Activated CD8-positive, alpha-beta memory T cell treated with anti-CD3 and anti-CD28 coated beads, Interleukin-2, amount 10 ng/mL, durations not matched to agents 7 days and 5 days (primary cell): ENCODE measurements at regions of chr3 and their contacts with region 1.

Region 1: GRCh38 chr3:111967651-111968274 is 11.1 kb upstream of the ABHD10 start:
- DNase-seq: peak; percentile 88
- ATAC-seq: peak; percentile 90
- H3K4me3 Mint-ChIP-seq: no peak overlapping the region
- H3K27ac Mint-ChIP-seq: peak overlapping the region; percentile 5
- H3K4me1 Mint-ChIP-seq: peaks cover 13% of the 10 kb centered on the region
- H3K27me3 Mint-ChIP-seq: no peaks in the 10 kb centered on the region

Region 2: DNA sequence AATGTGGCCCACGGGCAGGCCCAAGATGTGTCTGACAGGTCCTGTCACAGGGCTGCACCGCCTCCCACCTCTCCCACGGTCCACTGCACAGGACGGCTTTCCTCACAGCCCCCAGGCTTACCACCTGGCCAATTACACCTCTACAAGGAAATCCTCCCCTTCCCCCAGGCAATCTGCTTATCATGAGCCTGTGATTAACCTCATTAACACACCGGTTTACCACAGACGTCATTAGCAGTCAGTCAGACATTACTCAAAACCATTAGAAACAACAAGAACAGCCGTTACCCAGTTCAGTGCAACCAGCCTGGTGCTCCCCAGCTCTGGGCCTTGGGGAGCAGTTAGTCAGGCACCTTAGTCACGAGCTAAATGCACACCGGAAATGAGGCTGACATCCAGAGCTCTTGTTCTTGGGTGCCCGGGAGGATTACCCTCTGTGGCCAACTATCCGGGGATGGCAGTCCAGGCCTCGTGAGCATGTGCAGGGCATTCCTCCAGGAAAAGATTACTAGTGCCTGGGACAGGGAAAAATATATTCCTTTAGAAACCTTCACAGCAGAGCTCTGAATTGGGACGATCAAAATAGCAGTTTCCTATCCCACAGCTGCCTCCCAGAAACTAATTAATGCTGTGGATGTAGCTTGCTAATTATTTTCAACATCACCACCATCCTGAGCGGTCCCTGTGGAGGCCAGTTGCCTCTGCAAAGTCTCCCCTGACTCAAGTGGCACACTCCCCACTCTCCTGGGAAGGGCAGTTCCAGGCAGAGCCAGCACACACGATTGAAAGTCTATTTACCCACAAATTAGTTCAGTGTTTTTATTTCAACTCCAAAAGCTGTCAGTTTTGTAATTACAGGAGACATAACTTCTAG is 255.2 kb before region 1 on chr3:
- CTCF ChIA-PET with region 1: interaction called, 137 read pairs
- DNase-seq: peak; percentile 79
- ATAC-seq: peak; percentile 93
- H3K4me3 Mint-ChIP-seq: peak overlapping the region; percentile 31
- H3K27ac Mint-ChIP-seq: peak overlapping the region; percentile 86
- H3K4me1 Mint-ChIP-seq: peaks cover 27% of the 10 kb centered on the region
- H3K27me3 Mint-ChIP-seq: no peaks in the 10 kb centered on the region

Region 3: GRCh38 chr3:111723293-111724215 is 244.2 kb before region 1 on chr3:
- CTCF ChIA-PET with region 1: interaction called, 137 read pairs
- DNase-seq: no peak
- ATAC-seq: no peak
- H3K4me3 Mint-ChIP-seq: no peak overlapping the region
- H3K27ac Mint-ChIP-seq: no peak overlapping the region
- H3K4me1 Mint-ChIP-seq: peaks cover 6% of the 10 kb centered on the region
- H3K27me3 Mint-ChIP-seq: no peaks in the 10 kb centered on the region

Region 4: GRCh38 chr3:111895079-111895478 is 72.7 kb before region 1 on chr3:
- CTCF ChIA-PET with region 1: interaction called, 12 read pairs
- DNase-seq: no peak
- ATAC-seq: no peak
- H3K4me3 Mint-ChIP-seq: no peak overlapping the region
- H3K27ac Mint-ChIP-seq: no peak overlapping the region
- H3K4me1 Mint-ChIP-seq: peaks cover 5% of the 10 kb centered on the region
- H3K27me3 Mint-ChIP-seq: no peaks in the 10 kb centered on the region

Region 5: DNA sequence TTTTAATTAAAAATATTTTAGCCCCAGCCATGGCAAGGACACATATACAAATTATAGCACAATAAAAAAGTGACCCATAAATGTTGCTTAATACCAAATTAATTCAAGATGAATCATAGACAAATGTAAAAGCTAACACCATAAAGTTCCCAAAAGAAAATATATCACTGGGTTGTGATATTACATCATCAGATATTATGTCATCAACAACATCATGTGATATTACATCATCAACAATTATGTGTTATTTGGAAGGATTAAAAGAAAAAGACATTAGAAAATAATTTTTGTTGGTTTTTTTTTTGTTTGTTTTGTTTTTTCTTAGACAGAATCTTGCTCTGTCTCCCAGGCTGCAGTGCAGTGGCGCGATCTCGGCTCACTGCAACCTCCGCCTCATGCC is 23.4 kb before region 1 on chr3:
- CTCF ChIA-PET with region 1: no interaction called
- DNase-seq: no peak
- ATAC-seq: no peak
- H3K4me3 Mint-ChIP-seq: no peak overlapping the region
- H3K27ac Mint-ChIP-seq: no peak overlapping the region
- H3K4me1 Mint-ChIP-seq: no peaks in the 10 kb centered on the region
- H3K27me3 Mint-ChIP-seq: no peaks in the 10 kb centered on the region

Region 6: DNA sequence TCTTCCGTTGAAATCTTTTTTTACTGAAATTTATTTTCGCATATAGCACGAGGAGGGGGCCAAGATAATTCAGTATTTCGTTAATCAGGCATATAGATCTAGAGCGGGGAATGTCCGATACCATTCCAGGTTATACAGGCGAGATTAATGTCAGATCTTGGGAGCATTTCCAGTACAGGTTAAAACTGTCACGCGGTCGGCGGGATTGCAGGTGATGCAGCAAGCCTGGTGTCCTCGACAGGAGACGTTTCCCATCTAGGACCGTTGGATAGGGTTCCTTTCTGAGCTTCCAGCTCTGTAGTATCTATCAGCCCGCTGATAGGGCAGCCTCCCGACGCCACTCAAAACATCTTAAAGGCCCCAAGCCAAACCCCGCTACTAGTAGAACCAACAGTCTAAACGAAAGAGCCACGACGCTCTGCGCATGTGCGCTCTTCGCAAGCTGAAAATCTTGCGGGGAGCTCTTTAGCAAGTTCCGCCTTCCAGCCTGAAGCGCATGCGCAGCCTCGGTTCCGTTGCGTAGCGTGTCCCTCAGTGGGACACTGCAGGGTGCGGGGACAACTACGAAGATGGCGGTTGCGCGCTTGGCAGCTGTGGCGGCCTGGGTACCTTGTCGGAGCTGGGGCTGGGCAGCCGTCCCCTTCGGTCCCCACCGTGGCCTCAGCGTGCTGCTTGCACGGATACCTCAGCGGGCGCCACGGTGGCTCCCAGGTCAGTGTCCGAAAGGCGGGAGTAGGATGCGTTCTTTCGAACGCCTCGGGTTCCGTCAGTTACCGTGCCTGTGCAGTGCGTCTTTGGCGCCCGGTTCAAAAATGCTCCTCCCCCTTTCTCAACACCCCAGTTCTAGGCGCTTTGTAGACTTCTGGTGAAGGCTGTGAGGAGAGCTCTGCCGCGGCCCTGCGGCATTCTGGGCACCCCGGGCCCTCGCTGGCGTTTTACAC is 11.0 kb after region 1 on chr3 and contains the start of gene ABHD10:
- CTCF ChIA-PET with region 1: interaction called, 40 read pairs
- DNase-seq: peak; percentile 99
- ATAC-seq: peak; percentile 96
- H3K4me3 Mint-ChIP-seq: peak within 1 kb of the TSS; percentile 92
- H3K27ac Mint-ChIP-seq: peak within 1 kb of the TSS; percentile 94
- H3K4me1 Mint-ChIP-seq: peaks cover 39% of the 10 kb centered on the region
- H3K27me3 Mint-ChIP-seq: no peaks in the 10 kb centered on the region
- total RNA-seq, gene ABHD10: 45.2 to 50.7 TPM

Region 7: DNA sequence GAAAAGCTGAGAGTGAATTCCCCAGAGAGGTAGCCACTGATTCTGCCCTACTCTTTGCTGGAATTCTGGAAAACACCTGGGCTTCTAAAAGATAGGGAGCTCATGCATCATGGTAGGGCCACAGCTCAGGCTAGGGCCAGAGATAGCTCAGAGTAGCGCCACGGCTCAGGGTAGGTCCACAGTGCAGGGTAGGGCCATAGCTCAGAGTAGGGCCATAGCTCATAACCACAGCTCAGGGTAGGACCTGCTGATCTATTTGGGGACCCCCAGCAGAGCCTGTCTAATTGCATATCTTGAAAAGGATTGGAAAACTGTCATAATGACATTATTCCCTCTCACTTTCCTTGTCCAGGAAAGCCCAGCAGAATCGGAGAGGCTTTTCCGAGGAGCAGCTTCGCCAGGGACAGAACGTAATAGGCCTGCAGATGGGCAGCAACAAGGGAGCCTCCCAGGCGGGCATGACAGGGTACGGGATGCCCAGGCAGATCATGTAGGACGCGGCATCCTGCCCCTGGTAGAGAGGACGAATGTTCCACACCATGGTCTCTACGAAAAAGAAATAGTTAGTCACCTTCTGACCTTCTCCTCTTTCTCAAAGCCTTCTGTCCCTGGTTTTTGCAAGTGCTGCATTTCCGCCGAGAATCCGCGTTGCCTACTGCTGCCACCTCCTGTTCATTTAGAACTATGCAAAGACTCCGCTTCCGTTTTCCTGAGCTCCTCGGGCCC is 45.5 kb after region 1 on chr3:
- CTCF ChIA-PET with region 1: interaction called, 18 read pairs
- DNase-seq: peak; percentile 70
- ATAC-seq: peak; percentile 81
- H3K4me3 Mint-ChIP-seq: no peak overlapping the region
- H3K27ac Mint-ChIP-seq: no peak overlapping the region
- H3K4me1 Mint-ChIP-seq: peaks cover 13% of the 10 kb centered on the region
- H3K27me3 Mint-ChIP-seq: no peaks in the 10 kb centered on the region